Caco-2 (cell line): ENCODE measurements at regions of chr7 and their contacts with region 1.

Region 1: GRCh38 chr7:127066974-127067373 is 185.8 kb downstream of the GRM8 start:
- DNase-seq: peak; percentile 32 to 40
- H3K4me3 ChIP-seq: no peak overlapping the region
- H3K4me3 Mint-ChIP-seq: no peak overlapping the region
- H3K27ac Mint-ChIP-seq: no peak overlapping the region
- H3K4me1 ChIP-seq: no peaks in the 10 kb centered on the region
- H3K4me1 Mint-ChIP-seq: no peaks in the 10 kb centered on the region
- H3K27me3 ChIP-seq: no peaks in the 10 kb centered on the region
- H3K27me3 Mint-ChIP-seq: peaks cover 5% of the 10 kb centered on the region
- CTCF ChIP-seq: peak in 1 of 2 experiments; percentile 30

Region 2: GRCh38 chr7:126856691-126857291 is 210.2 kb before region 1 on chr7:
- CTCF ChIA-PET with region 1: no interaction called
- POLR2A ChIA-PET with region 1: no interaction called
- intact Hi-C with region 1: loop called (anchors 2 kb)
- DNase-seq: peak in 1 of 2 experiments; percentile 12
- H3K4me3 ChIP-seq: no peak overlapping the region
- H3K4me3 Mint-ChIP-seq: no peak overlapping the region
- H3K27ac Mint-ChIP-seq: no peak overlapping the region
- H3K4me1 ChIP-seq: no peaks in the 10 kb centered on the region
- H3K4me1 Mint-ChIP-seq: no peaks in the 10 kb centered on the region
- H3K27me3 ChIP-seq: no peaks in the 10 kb centered on the region; the same call in 1 of the 2 replicates
- H3K27me3 Mint-ChIP-seq: peaks cover 6% of the 10 kb centered on the region
- CTCF ChIP-seq: peak; percentile 56 to 60

Region 3: DNA sequence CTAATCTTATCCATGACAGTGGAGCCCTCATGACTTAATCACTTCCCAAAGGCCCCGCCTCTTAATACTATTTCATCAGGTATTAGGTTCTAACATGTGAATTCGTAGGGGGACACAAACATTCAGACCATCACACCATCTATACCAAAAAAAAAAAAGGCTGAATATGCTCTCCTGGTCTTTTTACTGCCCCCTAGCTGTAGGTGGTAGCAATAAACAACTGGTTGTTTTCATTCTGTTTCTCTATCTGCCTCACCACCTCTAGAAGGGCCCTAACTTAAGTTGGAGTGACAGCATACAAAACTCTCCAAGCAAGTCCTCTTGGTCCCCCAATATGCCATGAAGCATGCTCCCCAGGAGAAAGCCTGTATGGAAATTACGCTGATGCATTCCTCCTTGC is 91.7 kb after region 1 on chr7:
- CTCF ChIA-PET with region 1: no interaction called
- POLR2A ChIA-PET with region 1: no interaction called
- intact Hi-C with region 1: no loop called
- DNase-seq: no peak
- H3K4me3 ChIP-seq: no peak overlapping the region
- H3K4me3 Mint-ChIP-seq: no peak overlapping the region
- H3K27ac Mint-ChIP-seq: no peak overlapping the region
- H3K4me1 ChIP-seq: no peaks in the 10 kb centered on the region
- H3K4me1 Mint-ChIP-seq: no peaks in the 10 kb centered on the region
- H3K27me3 ChIP-seq: no peaks in the 10 kb centered on the region; the same call in 1 of the 2 replicates
- H3K27me3 Mint-ChIP-seq: peaks cover 14% of the 10 kb centered on the region
- CTCF ChIP-seq: peak; percentile 13 to 19